ENCODE measurements at regions of chrX and their contacts with region 1.

Region 1: DNA sequence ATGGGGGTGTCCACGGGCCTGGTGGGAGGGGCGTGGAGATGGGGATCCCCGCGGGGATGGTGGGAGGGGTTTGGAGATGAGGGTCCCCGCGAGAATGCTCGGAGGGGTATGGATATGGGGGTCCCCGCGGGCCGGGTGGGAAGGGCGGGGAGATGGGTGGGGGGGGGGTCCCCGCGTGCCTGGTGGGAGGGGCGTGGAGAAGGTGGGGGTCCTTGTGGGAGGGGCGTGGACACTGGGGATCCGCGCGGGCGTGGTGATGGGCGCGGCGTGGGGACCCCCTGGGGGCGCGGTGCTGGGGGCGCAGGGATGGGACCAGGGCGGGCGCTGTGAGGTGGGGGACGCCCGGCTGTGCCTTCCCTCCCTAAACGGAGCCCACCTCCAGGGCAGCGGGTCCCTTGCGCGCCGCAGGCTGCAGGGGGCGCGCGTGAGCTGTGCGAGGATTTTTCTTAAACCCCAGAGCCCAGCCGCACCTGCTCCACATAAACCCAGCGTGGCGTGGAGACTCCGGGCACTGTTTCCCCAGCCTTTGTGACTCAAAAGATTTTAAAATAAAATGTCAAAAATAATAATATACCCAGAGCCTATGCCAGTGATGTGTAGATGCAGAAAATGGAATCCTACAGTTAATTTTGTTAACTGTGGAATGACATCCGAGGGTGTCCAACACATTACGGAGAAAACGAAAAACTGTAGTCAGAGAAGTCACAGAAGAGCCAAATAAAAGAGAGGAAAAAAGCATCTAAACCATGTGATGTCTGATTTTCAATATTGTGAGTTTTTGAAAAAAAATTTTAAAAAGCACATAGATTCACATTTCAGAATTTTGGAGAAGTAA is 1.5 kb upstream of the ASMTL start:
- DNase-seq: no peak
- ATAC-seq: peak; percentile 67
- H3K4me3 ChIP-seq: peak overlapping the region in 1 of 2 experiments; percentile 14; a peak in 1 of 4 replicates
- H3K27ac ChIP-seq: no peak overlapping the region
- H3K4me1 ChIP-seq: no peaks in the 10 kb centered on the region
- H3K27me3 ChIP-seq: no peaks in the 10 kb centered on the region
- CTCF ChIP-seq: peak; percentile 89

Region 2: DNA sequence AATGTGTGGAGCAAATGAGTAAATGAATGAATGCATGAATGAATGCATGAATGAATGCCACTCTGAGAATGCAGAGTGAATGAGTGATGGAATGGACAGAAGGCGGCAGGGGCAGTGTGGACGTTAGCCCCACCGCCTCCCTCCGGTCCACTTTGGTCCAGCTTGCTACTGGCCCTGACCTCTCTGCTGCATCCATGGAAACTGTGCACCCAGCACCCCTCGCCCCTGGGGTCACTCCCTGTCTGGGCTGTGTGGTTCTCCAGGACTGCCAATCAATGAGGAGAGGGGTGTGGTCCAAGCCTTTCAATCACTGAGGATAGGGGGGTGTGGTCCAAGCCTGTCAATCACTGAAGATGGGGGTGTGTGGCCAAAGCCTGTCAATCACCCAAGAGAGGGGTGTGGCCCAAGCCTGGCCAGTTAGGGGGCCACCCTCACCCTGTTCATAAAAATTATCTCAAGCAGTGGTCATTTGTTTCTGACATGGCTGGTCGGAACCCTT is 37.7 kb after region 1 on chrX:
- CTCF ChIA-PET with region 1: no interaction called
- POLR2A ChIA-PET with region 1: no interaction called
- in situ Hi-C with region 1: no loop called
- intact Hi-C with region 1: no loop called
- DNase-seq: no peak
- ATAC-seq: peak; percentile 82
- H3K4me3 ChIP-seq: no peak overlapping the region
- H3K27ac ChIP-seq: no peak overlapping the region
- H3K4me1 ChIP-seq: no peaks in the 10 kb centered on the region
- H3K27me3 ChIP-seq: no peaks in the 10 kb centered on the region
- CTCF ChIP-seq: no peak

Region 3: DNA sequence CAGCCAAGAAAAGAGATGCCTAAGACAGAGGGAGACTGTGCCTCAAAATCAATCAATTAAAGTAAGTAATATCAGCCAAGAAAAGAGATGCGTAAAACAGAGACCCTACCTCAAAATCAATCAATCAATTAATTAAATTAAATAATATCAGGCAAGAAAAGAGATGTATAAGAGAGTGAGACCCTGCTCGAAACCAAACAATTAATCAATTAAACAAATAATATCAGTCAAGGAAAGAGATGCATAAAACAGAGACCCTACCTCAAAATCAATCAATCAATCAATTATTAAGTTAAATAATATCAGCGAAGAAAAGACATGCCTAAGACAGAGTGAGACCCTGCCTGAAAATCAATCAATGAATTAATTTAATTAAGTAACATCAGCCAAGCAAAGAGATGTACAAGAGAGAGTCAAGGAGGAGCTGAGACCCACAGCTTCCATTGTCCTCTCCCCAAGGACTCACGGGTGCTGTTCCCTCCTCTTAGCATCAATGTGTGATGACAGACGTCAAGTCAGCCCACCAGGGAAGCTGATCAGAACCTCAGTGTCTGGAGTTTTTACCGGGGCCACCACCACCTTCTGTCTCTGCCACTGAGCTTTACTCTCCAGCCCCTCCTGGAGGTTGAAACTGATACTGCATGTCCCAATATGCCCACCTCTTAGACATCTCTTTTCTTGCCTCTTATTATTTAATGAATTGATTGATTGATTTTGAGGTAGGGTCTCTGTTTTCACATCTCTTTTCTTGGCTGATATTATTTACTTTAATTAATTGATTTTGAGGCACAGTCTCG is 126.8 kb after region 1 on chrX:
- CTCF ChIA-PET with region 1: no interaction called
- POLR2A ChIA-PET with region 1: no interaction called
- in situ Hi-C with region 1: no loop called
- intact Hi-C with region 1: loop called (anchors 10 kb)
- DNase-seq: peak; percentile 35
- ATAC-seq: peak; percentile 60
- H3K4me3 ChIP-seq: no peak overlapping the region
- H3K27ac ChIP-seq: no peak overlapping the region
- H3K4me1 ChIP-seq: no peaks in the 10 kb centered on the region
- H3K27me3 ChIP-seq: no peaks in the 10 kb centered on the region
- CTCF ChIP-seq: peak; percentile 74

Measured in Panc1 (cell line).